B cell (primary cell): ENCODE measurements at regions of chr14 and their contacts with region 1.

Region 1: GRCh38 chr14:66495218-66496098 is 9.3 kb downstream of the CCDC196 start:
- DNase-seq: peak; percentile 61
- ATAC-seq: peak; percentile 61
- H3K4me3 ChIP-seq: no peak overlapping the region
- H3K4me3 Mint-ChIP-seq: no peak overlapping the region
- H3K27ac ChIP-seq: no peak overlapping the region
- H3K27ac Mint-ChIP-seq: no peak overlapping the region
- H3K4me1 ChIP-seq: peaks cover 3 to 8% of the 10 kb centered on the region in 2 donors
- H3K4me1 Mint-ChIP-seq: peaks cover 6% of the 10 kb centered on the region
- H3K27me3 ChIP-seq: no peaks in the 10 kb centered on the region
- H3K27me3 Mint-ChIP-seq: no peaks in the 10 kb centered on the region
- CTCF ChIP-seq: peak; percentile 80

Region 2: DNA sequence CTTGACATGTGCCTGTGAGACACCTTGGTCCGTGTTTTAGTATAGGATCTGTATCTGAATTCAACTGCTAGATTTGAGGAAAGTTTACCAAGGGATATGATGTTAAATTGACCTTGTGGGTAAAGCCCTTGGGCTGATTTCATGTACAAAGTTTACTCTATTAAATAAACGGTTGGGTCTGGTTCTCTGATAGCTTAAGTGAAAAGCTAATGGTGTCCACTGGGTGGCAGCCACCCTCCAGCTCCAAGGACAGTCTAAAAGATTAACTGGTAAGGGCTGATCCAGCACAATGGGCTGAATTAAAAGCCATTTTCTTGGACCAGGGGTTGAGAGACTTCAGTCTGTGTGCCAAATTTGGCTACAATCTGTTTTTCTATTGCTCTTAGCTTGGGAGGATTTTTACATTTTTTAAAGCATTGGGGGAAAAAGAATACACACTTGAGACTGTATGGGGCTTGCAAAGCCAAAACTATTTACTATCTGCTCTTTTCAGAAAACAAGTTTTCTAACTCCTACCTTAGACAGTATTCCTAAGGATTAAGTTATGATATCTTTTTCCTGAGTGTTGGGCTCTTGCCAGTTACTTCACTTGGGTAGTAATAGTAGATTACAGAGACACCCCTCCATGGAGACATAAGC is 129.0 kb after region 1 on chr14:
- CTCF ChIA-PET with region 1: interaction called, 3 read pairs
- POLR2A ChIA-PET with region 1: no interaction called
- intact Hi-C with region 1: loop called (anchors 5 kb)
- DNase-seq: peak; percentile 35
- ATAC-seq: no peak
- H3K4me3 ChIP-seq: no peak overlapping the region
- H3K4me3 Mint-ChIP-seq: no peak overlapping the region
- H3K27ac ChIP-seq: no peak overlapping the region
- H3K27ac Mint-ChIP-seq: no peak overlapping the region
- H3K4me1 ChIP-seq: no peaks in the 10 kb centered on the region
- H3K4me1 Mint-ChIP-seq: no peaks in the 10 kb centered on the region
- H3K27me3 ChIP-seq: no peaks in the 10 kb centered on the region
- H3K27me3 Mint-ChIP-seq: no peaks in the 10 kb centered on the region
- CTCF ChIP-seq: peak; percentile 68

Region 3: DNA sequence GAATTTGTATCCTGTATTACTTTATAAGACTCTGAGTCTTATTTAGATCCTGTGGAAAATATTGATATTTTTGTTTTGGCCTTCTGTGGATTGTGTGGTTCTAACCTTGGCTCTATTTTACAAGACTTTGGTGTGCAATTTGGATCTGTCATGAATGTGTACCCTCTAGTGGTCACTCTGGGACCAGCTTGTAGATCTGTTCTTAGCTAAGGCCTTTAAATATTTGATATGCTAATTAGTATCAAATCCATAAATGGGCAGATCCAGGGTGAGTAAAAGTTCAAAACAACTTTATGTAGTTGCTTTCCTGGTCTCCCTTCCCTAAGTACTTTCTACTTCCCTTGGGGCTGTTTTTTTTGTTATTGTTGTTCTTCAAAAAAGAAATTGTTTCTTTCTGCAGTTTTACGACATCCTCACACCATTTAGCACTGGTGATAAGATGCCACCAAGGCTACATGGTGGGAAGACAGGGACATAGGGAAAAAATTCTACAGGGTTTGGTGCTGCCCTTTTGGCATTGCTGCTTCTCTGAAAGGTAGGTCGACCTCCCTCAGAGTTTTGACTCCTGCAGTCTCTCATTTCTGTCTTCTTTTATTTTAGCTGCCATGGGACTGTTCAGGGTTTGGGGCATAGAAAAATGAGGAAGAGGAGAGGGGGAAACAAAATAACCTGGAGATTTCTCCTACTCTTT is 251.0 kb after region 1 on chr14:
- CTCF ChIA-PET with region 1: no interaction called
- POLR2A ChIA-PET with region 1: no interaction called
- intact Hi-C with region 1: loop called (anchors 10 kb)
- DNase-seq: peak; percentile 12
- ATAC-seq: no peak
- H3K4me3 ChIP-seq: no peak overlapping the region
- H3K4me3 Mint-ChIP-seq: no peak overlapping the region
- H3K27ac ChIP-seq: no peak overlapping the region
- H3K27ac Mint-ChIP-seq: no peak overlapping the region
- H3K4me1 ChIP-seq: no peaks in the 10 kb centered on the region
- H3K4me1 Mint-ChIP-seq: no peaks in the 10 kb centered on the region
- H3K27me3 ChIP-seq: no peaks in the 10 kb centered on the region
- H3K27me3 Mint-ChIP-seq: no peaks in the 10 kb centered on the region
- CTCF ChIP-seq: peak; percentile 26

Region 4: DNA sequence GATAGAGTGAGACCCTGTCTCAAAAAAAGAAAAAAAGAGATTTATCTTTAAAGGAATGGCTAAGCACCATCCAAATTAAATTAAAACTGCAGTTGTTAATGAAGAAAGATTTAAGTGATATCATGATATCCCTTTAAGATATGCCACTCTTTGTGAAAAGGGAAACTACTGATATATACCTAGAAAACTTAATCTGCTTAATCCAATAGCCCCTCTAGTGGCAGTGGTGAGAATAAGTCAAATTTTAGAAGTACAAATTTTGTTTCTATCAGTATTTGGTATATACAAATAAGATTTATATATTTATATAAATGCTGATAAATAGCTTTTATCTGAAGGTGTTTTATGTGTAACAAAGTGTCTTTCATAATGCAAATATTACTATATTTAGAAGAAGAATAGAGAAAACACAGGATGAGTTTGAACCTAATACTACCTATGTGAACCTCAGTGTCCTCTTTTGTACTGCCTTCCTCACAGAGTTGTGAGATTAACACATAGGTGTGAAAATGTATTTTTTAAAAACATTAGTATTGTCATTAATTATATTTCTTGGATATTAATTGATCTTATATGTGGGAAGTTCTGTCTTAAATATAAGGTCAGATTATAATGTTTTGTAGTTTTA is 642.4 kb after region 1 on chr14:
- CTCF ChIA-PET with region 1: no interaction called
- POLR2A ChIA-PET with region 1: no interaction called
- intact Hi-C with region 1: loop called (anchors 1 kb)
- DNase-seq: no peak
- ATAC-seq: no peak
- H3K4me3 ChIP-seq: no peak overlapping the region
- H3K4me3 Mint-ChIP-seq: no peak overlapping the region
- H3K27ac ChIP-seq: no peak overlapping the region
- H3K27ac Mint-ChIP-seq: no peak overlapping the region
- H3K4me1 ChIP-seq: no peaks in the 10 kb centered on the region
- H3K4me1 Mint-ChIP-seq: no peaks in the 10 kb centered on the region
- H3K27me3 ChIP-seq: no peaks in the 10 kb centered on the region
- H3K27me3 Mint-ChIP-seq: no peaks in the 10 kb centered on the region
- CTCF ChIP-seq: peak; percentile 39